HepG2 (cell line): ENCODE measurements at regions of chr6 and their contacts with region 1.

Region 1: GRCh38 chr6:24069526-24069925 is 56.5 kb upstream of the NRSN1 start:
- DNase-seq: no peak
- ATAC-seq: no peak
- H3K4me3 ChIP-seq: no peak overlapping the region
- H3K27ac ChIP-seq: no peak overlapping the region
- H3K4me1 ChIP-seq: no peaks in the 10 kb centered on the region
- H3K27me3 ChIP-seq: no peaks in the 10 kb centered on the region
- CTCF ChIP-seq: no peak
- EP300 ChIP-seq: no peak
- POLR2A ChIP-seq: no peak
- RAD21 ChIP-seq: no peak

Region 2: DNA sequence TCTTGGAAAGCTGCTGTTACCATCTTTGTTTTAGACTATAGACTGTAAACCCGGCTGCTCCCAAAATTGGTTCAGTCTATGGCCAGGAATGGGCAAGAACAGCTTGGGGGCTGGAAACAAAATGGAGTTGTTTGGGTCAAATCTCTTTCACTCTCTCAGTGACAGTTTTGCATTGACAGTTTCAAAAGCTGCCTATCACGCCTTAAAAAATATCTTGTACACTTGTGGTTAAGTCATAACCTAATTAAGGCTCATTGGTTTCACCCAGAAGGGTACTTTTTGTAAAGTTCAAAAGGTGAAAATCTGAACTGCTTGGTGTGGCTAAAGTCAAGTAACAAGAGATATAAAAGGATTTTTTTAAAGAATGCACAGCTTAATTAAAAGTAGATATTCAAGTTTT is 1696.6 kb before region 1 on chr6:
- CTCF ChIA-PET with region 1: no interaction called
- POLR2A ChIA-PET with region 1: no interaction called
- in situ Hi-C with region 1: no loop called
- intact Hi-C with region 1: no loop called
- DNase-seq: no peak
- ATAC-seq: no peak
- H3K4me3 ChIP-seq: no peak overlapping the region
- H3K27ac ChIP-seq: no peak overlapping the region
- H3K4me1 ChIP-seq: no peaks in the 10 kb centered on the region
- H3K27me3 ChIP-seq: no peaks in the 10 kb centered on the region
- CTCF ChIP-seq: no peak
- EP300 ChIP-seq: no peak
- POLR2A ChIP-seq: no peak
- RAD21 ChIP-seq: no peak

Region 3: DNA sequence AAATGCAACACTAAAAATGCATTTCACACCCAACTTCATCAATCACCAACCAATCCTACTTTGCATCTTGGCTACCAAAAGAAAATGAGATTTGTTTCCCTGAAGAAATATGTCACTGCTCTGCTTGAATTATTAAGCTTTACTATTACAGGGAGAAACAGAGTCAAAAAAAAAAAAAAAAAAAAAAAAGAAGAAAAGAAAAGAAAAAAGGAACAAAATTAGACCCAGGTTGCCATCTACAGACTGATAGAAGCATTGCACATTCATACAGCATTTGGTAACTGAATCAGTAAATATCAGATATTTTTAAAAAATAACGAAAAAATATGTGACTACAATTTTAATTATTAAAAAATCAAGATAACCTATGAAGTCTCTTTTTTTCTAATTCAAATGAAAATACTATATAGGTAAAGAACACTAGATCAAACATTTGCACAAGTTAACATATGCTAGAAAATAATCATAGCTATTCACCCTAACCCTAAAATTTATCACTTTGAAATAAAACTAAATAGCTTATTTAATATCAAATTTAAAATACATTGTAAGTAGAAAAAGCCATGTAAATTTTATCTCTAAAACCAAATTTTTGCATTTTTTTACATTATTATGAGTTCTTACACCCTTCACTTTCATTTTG is 205.0 kb after region 1 on chr6:
- CTCF ChIA-PET with region 1: interaction called, 25 read pairs
- POLR2A ChIA-PET with region 1: no interaction called
- in situ Hi-C with region 1: loop called (anchors 5 kb)
- intact Hi-C with region 1: loop called (anchors 1 kb)
- DNase-seq: no peak
- ATAC-seq: no peak
- H3K4me3 ChIP-seq: no peak overlapping the region
- H3K27ac ChIP-seq: no peak overlapping the region
- H3K4me1 ChIP-seq: no peaks in the 10 kb centered on the region
- H3K27me3 ChIP-seq: no peaks in the 10 kb centered on the region
- CTCF ChIP-seq: peak; percentile 51
- EP300 ChIP-seq: no peak
- POLR2A ChIP-seq: no peak
- RAD21 ChIP-seq: no peak

Region 4: GRCh38 chr6:25717866-25718740 is 1648.6 kb after region 1 on chr6:
- CTCF ChIA-PET with region 1: no interaction called
- POLR2A ChIA-PET with region 1: no interaction called
- in situ Hi-C with region 1: no loop called
- intact Hi-C with region 1: no loop called
- DNase-seq: peak; percentile 39
- ATAC-seq: no peak
- H3K4me3 ChIP-seq: no peak overlapping the region
- H3K27ac ChIP-seq: no peak overlapping the region
- H3K4me1 ChIP-seq: peaks cover 38% of the 10 kb centered on the region
- H3K27me3 ChIP-seq: no peaks in the 10 kb centered on the region
- CTCF ChIP-seq: peak; percentile 64
- EP300 ChIP-seq: no peak
- POLR2A ChIP-seq: no peak
- RAD21 ChIP-seq: peak; percentile 56; the same call in 1 of the 2 replicates